PC-9 (cell line): ENCODE measurements at regions of chrX and their contacts with region 1.

Region 1: GRCh38 chrX:100768679-100769338 is 36.9 kb upstream of the SYTL4 start:
- DNase-seq: peak; percentile 47 to 74
- H3K4me3 ChIP-seq: no peak overlapping the region
- H3K27ac ChIP-seq: no peak overlapping the region
- H3K4me1 ChIP-seq: no peaks in the 10 kb centered on the region
- H3K27me3 ChIP-seq: no peaks in the 10 kb centered on the region
- CTCF ChIP-seq: peak; percentile 99

Region 2: DNA sequence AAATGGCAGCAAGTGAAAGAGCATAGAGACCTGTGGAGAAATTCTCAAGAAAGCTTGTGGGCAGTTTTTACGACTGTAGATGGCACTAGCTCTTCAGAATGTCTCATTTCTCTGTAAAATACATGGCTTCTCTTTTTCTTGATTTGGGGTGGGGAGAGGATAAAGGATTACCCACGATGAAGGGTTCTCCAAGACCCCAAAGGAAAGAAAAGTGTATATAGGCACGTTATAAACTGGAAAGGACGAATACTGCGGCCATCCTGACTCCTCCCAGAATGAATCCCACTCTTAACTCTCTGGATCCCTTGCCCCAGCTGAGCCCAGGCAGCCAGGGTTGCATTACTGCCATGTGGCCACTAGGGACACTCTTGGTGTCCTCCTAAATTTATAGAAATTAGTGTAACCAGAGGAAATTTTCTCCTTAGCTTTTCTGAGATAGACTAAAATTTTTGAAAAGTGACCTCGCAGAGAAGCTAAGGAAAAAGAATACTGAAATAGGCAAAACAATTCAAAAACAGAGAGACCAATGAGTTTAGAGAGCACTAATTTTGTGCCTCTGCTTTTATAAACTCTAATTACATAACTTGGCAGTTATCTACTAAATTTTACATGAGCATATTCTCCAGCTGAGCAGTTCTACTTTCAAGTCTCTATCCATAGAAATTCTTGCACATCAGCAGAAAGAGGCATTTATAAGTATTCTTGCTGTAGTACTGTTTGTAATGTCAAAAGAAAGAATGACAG is 321.0 kb before region 1 on chrX:
- CTCF ChIA-PET with region 1: no interaction called
- POLR2A ChIA-PET with region 1: no interaction called
- intact Hi-C with region 1: loop called (anchors 5 kb)
- DNase-seq: peak in 1 of 2 experiments; percentile 28
- H3K4me3 ChIP-seq: no peak overlapping the region
- H3K27ac ChIP-seq: no peak overlapping the region
- H3K4me1 ChIP-seq: no peaks in the 10 kb centered on the region
- H3K27me3 ChIP-seq: no peaks in the 10 kb centered on the region
- CTCF ChIP-seq: peak; percentile 87